ENCODE measurements at regions of chr19 and their contacts with region 1.

Region 1: DNA sequence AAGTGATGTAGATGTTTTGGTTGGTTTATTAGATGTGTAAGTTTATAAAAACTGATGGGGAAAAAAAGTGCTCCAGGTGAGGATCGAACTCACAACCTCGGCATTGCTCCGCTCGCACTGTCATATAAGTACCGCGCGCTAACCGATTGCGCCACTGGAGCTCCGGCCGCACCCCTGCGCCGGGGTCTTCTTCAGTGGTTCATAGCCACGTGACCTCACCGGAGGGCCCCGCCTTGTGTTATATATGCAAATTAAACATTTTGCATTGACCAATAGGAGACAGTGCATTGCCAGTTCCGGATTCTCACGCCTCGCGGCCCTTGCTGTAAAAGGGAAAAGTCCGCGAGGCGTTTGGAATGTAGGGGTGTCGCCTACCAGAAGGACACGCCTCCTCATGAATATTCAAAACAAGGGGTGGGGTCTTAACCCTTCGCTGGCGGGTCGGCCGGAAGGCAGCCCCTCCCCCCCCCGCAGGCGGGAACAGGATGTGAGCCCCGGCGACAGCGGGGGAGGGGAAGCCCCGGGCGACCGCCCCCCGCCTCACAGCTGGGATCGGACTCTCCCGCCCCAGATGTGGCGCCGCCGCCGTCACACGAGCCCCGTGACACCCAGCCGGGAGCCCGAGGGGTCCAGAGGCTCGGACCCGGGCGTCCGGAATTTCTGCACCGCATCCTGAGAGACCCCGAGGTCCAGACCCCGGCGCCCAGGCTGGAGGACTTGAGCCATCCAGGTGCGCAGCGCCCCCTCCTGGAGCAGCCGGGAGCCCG is at the start of gene PLEKHG2:
- H3K4me3 Mint-ChIP-seq: peak within 1 kb of the TSS; percentile 81
- H3K27ac Mint-ChIP-seq: peak within 1 kb of the TSS; percentile 98
- H3K4me1 Mint-ChIP-seq: peaks cover 44% of the 10 kb centered on the region
- H3K27me3 Mint-ChIP-seq: peaks cover 2% of the 10 kb centered on the region

Region 2: GRCh38 chr19:39307046-39307823 is 105.0 kb before region 1 on chr19:
- intact Hi-C with region 1: no loop called
- H3K4me3 Mint-ChIP-seq: no peak overlapping the region
- H3K27ac Mint-ChIP-seq: peak overlapping the region; percentile 1
- H3K4me1 Mint-ChIP-seq: peaks cover 28% of the 10 kb centered on the region
- H3K27me3 Mint-ChIP-seq: peaks cover 7% of the 10 kb centered on the region

Region 3: DNA sequence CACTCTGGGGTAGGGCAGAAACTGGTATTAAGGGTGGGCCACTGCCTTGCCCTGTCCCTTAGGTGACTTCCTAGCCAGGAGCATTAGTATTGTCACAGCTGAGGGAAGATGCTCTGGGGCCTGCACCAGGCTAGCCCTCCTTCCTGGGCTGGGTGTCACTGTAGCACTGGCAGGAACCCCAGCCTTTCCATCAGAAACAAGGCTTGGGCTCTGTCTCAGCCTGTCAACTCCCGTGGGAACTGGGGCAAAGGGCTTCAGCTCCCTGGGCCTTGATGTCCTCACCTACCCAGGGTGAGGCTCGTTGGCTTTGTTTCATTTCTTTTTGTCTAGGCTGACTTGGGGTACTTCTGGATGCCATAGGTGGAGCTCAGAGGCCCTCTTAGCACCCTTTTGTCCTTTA is 39.3 kb before region 1 on chr19:
- intact Hi-C with region 1: no loop called
- H3K4me3 Mint-ChIP-seq: no peak overlapping the region
- H3K27ac Mint-ChIP-seq: no peak overlapping the region
- H3K4me1 Mint-ChIP-seq: no peaks in the 10 kb centered on the region
- H3K27me3 Mint-ChIP-seq: no peaks in the 10 kb centered on the region

Region 4: DNA sequence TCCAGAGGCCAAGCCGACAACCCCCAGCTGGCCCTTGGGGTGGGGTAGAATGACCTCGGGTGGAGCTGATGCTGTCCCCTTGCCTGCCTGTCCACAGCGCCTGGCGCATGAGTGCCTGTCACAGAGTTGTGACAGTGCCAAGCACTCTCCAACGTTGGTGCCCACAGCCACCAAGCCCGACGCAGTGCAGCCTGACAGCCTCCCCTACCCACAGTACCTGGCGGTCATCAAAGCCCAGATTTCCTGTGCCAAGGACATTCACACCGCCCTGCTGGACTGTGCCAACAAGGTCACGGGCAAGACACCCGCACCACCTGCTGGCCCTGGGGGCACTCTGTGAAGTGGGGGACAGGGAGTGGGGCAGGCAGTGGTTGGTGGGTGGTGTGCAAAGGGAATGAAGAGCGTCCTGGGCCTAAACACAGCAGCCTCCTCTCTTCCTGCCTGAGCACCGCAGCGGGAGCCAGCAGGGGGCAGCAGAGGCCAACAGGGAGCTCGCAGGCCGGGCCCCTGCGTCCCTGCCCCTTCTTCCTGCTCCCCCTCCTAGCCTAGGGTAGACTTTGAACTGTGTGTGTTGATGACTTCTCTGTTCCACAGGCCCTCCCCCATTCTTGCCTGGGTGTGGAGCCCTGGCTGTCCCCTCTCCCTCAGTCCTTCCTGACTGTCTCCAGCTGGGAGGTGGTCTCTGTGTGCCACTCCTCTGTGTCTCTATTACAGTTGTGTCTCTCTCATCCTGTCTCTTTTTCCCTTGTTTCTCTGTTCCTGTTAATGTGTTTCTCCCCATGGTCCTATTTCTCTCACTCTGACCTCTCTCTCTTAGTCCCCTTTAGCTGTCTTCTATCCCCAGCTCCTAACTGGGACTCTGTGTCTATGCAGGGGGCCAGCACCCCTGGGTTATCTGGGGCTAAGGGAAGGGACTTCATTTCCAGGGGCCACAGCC is 14.7 kb before region 1 on chr19:
- intact Hi-C with region 1: loop called (anchors 1 kb)
- H3K4me3 Mint-ChIP-seq: peak overlapping the region; percentile 60
- H3K27ac Mint-ChIP-seq: peak overlapping the region; percentile 99
- H3K4me1 Mint-ChIP-seq: peaks cover 80% of the 10 kb centered on the region
- H3K27me3 Mint-ChIP-seq: no peaks in the 10 kb centered on the region

Region 5: GRCh38 chr19:39557441-39558151 is 145.3 kb after region 1 on chr19:
- intact Hi-C with region 1: no loop called
- H3K4me3 Mint-ChIP-seq: peak overlapping the region; percentile 55
- H3K27ac Mint-ChIP-seq: peak overlapping the region; percentile 54
- H3K4me1 Mint-ChIP-seq: peaks cover 58% of the 10 kb centered on the region
- H3K27me3 Mint-ChIP-seq: peaks cover 21% of the 10 kb centered on the region

Measured in dendritic cell treated with granulocyte-macrophage colony-stimulating factor and Interleukin-4, amounts not matched to agents 40 ng/mL and 50 ng/mL, for 4 days (primary cell).